SK-N-SH (cell line): ENCODE measurements at regions of chr10 and their contacts with region 1.

Region 1: GRCh38 chr10:114304017-114304570 is 65.0 kb downstream of the VWA2 start:
- DNase-seq: peak; percentile 86
- H3K4me3 ChIP-seq: peak overlapping the region; percentile 65 to 74
- H3K27ac ChIP-seq: peak overlapping the region; percentile 38 to 60; a peak in 3 of 4 replicates
- H3K4me1 ChIP-seq: peaks cover 0 to 11% of the 10 kb centered on the region in 2 experiments; a peak in 1 of 4 replicates
- H3K27me3 ChIP-seq: no peaks in the 10 kb centered on the region
- CTCF ChIP-seq: peak; percentile 80
- EP300 ChIP-seq: no peak
- RAD21 ChIP-seq: peak; percentile 96

Region 2: GRCh38 chr10:114100848-114101741 is 203.0 kb before region 1 on chr10:
- CTCF ChIA-PET with region 1: no interaction called
- POLR2A ChIA-PET with region 1: no interaction called
- DNase-seq: peak; percentile 48
- H3K4me3 ChIP-seq: peak overlapping the region; percentile 30 to 43
- H3K27ac ChIP-seq: no peak overlapping the region
- H3K4me1 ChIP-seq: peaks cover 0 to 10% of the 10 kb centered on the region in 2 experiments; a peak in 1 of 4 replicates
- H3K27me3 ChIP-seq: peaks cover 8% of the 10 kb centered on the region
- CTCF ChIP-seq: no peak
- EP300 ChIP-seq: no peak
- RAD21 ChIP-seq: no peak

Region 3: DNA sequence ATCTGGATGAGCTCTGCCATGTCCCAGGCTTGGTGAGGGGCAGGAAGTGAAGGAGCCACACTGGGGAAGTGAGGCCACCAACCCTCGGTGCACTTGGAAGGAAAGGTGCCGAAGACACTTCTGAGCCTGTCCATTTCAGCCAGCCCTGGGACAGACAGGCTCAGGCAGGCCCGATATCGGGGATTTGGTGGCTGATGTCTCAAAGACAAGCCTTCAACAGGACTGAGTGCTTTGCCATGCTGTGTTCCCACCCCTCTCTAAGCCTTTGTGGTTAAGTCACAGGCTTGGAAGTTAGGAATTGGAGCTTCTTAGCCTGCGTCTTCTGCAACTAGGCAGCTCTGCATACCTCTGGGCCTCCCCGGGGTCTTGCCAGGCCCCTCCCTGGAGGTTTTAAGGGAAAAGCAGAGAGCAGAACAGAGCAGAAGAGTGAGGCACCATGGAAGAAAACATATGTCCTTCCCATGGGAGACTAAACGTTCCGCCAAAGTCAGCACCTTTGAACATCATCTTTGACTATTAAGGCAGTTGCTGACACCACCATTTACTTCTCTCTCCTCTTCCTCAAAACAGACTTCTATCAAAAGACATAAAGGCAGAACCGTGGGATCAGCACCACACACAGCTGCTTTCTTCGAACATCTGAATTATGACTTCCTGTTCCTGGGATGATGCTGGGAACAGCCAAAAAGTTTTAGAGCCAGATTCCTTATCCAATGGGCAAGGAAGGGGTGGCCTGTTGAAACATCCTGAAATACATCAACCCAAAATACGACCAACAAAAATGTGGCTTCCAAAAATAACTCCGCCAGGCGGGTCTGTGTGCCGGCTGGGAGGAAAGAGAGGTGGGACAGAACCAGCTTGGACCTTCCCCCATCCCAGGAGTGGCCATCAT is 28.5 kb after region 1 on chr10:
- CTCF ChIA-PET with region 1: interaction called, 11 read pairs
- POLR2A ChIA-PET with region 1: no interaction called
- DNase-seq: no peak
- H3K4me3 ChIP-seq: no peak overlapping the region
- H3K27ac ChIP-seq: no peak overlapping the region
- H3K4me1 ChIP-seq: no peaks in the 10 kb centered on the region; a peak in 1 of 4 replicates
- H3K27me3 ChIP-seq: peaks cover 5% of the 10 kb centered on the region; the same call in 1 of the 2 replicates
- CTCF ChIP-seq: no peak
- EP300 ChIP-seq: no peak
- RAD21 ChIP-seq: no peak

Region 4: GRCh38 chr10:114403541-114404161 is 99.6 kb after region 1 on chr10:
- CTCF ChIA-PET with region 1: interaction called, 30 read pairs
- POLR2A ChIA-PET with region 1: no interaction called
- DNase-seq: peak; percentile 59
- H3K4me3 ChIP-seq: peak overlapping the region in 1 of 2 experiments; percentile 43; a peak in 1 of 4 replicates
- H3K27ac ChIP-seq: no peak overlapping the region
- H3K4me1 ChIP-seq: peaks cover 0 to 7% of the 10 kb centered on the region in 2 experiments; a peak in 1 of 4 replicates
- H3K27me3 ChIP-seq: peaks cover 35% of the 10 kb centered on the region; the same call in 1 of the 2 replicates
- CTCF ChIP-seq: peak; percentile 14; the same call in 1 of the 2 replicates
- EP300 ChIP-seq: no peak
- RAD21 ChIP-seq: no peak

Region 5: GRCh38 chr10:114453576-114453975 is 149.5 kb after region 1 on chr10:
- CTCF ChIA-PET with region 1: interaction called, 54 read pairs
- POLR2A ChIA-PET with region 1: no interaction called
- DNase-seq: no peak
- H3K4me3 ChIP-seq: no peak overlapping the region
- H3K27ac ChIP-seq: no peak overlapping the region
- H3K4me1 ChIP-seq: no peaks in the 10 kb centered on the region
- H3K27me3 ChIP-seq: no peaks in the 10 kb centered on the region
- CTCF ChIP-seq: no peak
- EP300 ChIP-seq: no peak
- RAD21 ChIP-seq: no peak

Region 6: GRCh38 chr10:114486938-114487814 is 183.1 kb after region 1 on chr10:
- CTCF ChIA-PET with region 1: interaction called, 27 read pairs
- POLR2A ChIA-PET with region 1: no interaction called
- DNase-seq: peak; percentile 37
- H3K4me3 ChIP-seq: no peak overlapping the region
- H3K27ac ChIP-seq: peak overlapping the region; percentile 50 to 80; a peak in 3 of 4 replicates
- H3K4me1 ChIP-seq: peaks cover 21 to 39% of the 10 kb centered on the region in 2 experiments; a peak in 3 of 4 replicates
- H3K27me3 ChIP-seq: no peaks in the 10 kb centered on the region
- CTCF ChIP-seq: peak; percentile 34
- EP300 ChIP-seq: peak in 1 of 2 experiments; percentile 4; a peak in 2 of 4 replicates
- RAD21 ChIP-seq: peak; percentile 46

Region 7: GRCh38 chr10:114556236-114557122 is 252.4 kb after region 1 on chr10:
- CTCF ChIA-PET with region 1: interaction called, 14 read pairs
- POLR2A ChIA-PET with region 1: no interaction called
- DNase-seq: no peak
- H3K4me3 ChIP-seq: no peak overlapping the region
- H3K27ac ChIP-seq: no peak overlapping the region
- H3K4me1 ChIP-seq: peaks cover 0 to 3% of the 10 kb centered on the region in 2 experiments; a peak in 1 of 4 replicates
- H3K27me3 ChIP-seq: no peaks in the 10 kb centered on the region
- CTCF ChIP-seq: no peak
- EP300 ChIP-seq: no peak
- RAD21 ChIP-seq: no peak